Activated naive CD4-positive, alpha-beta T cell treated with anti-CD3 and anti-CD28 coated beads, Interleukin-2, amount 10 ng/mL, durations not matched to agents 7 days and 5 days (primary cell): ENCODE measurements at regions of chr6 and their contacts with region 1.

Region 1: DNA sequence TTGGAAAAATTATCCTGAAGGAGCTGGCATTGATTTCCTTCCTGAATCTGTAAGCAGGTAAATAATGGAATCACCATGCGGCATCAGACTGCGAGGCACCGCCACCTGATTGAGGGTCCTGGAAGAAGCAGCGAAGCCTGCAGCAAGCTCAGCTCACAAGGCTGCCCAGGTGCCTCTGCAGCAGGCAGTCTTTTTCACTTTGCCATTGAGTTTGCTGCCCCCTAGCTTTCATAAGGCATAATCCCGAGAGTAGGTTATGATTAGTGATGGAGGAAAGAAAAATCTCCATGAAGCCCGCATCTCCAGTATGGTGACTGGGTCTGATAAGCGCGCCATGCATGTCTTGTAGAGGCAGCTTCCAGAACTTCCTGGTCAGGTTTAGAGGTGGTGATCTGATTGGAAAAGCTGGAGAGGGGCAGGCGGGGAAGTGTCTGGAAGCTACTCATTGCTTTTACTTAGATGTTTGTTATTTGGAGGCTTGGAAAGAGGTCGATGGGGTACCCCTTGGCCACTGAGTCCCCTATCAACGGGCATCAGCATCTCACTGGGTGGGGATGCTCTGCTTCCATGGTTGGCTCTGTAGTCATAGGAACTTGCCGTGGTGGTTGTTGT is 26.7 kb downstream of the IYD start:
- DNase-seq: peak; percentile 37
- H3K4me3 Mint-ChIP-seq: no peak overlapping the region
- H3K27ac Mint-ChIP-seq: no peak overlapping the region
- H3K4me1 Mint-ChIP-seq: no peaks in the 10 kb centered on the region
- H3K27me3 Mint-ChIP-seq: peaks cover 19% of the 10 kb centered on the region

Region 2: DNA sequence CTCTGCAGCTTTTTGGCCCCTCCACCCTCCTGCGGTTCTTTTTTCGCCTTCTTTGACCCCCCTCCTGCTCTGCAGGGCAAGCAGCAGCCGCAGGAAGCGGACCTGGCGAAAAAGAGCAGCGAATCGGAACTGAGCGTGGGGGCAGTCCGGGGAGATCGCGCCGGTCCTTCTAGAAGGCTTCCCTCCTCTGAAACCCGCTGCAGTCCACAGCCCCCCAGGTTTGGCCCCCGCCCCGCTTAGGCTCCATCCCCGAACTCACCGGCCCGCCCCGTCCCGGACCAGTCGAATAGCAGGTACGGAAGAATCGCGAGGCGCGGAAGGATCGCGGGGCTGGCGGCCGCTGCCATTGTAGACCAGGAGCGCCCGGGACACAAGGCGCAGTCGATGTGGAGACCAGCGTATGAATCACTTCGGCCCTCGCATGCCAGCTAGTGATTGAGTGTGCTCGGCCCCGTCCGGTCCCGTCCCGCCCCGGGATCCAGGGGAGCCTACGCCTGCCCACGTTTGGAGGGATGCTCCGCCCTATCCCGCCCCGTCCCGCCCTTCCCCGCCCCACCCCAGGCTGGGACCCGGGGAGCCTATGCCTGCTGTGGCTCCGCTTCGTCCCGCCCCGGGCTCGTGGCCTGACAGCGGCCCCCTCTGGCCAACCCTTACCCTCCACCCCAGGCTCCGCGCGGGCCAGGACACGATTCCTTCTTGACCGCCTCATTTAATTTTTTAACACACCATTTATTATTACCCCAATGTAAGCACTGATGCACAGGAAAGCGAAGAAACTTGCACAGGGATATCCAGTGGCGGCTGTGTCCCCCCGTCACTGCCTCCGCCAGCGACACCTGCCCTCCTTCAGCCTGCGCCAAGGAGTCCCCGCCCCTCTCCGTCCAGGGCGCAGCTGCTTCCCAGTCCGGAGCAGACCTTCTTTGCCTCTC is 326.5 kb before region 1 on chr6 and contains the start of gene ULBP3:
- CTCF ChIA-PET with region 1: interaction called, 21 read pairs
- DNase-seq: peak; percentile 81
- H3K4me3 Mint-ChIP-seq: peak within 1 kb of the TSS; percentile 74
- H3K27ac Mint-ChIP-seq: no peak within 1 kb of the TSS
- H3K4me1 Mint-ChIP-seq: peaks cover 28% of the 10 kb centered on the region
- H3K27me3 Mint-ChIP-seq: peaks cover 51% of the 10 kb centered on the region

Region 3: GRCh38 chr6:150079604-150080003 is 315.9 kb before region 1 on chr6:
- CTCF ChIA-PET with region 1: interaction called, 40 read pairs
- DNase-seq: peak; percentile 64
- H3K4me3 Mint-ChIP-seq: no peak overlapping the region
- H3K27ac Mint-ChIP-seq: no peak overlapping the region
- H3K4me1 Mint-ChIP-seq: peaks cover 24% of the 10 kb centered on the region
- H3K27me3 Mint-ChIP-seq: peaks cover 40% of the 10 kb centered on the region

Region 4: DNA sequence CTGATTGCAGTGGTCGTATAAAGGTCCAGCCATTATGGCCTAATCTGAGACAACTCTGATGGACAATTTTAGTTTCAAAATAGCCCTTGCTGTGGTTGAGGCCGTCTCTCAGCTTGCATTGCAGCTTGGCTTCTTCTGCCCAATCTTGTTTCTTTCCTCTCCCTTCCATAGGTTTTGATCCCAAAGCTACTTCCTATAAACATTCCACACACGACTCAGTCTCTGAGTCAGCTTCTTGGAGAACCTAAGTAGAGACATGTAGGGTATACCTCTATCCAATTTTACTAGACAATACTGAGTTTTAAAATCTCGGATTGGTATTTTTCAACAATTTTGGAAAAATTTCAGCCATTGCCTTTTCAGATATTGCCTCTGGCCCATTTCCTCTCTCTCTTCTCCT is 13.3 kb before region 1 on chr6:
- CTCF ChIA-PET with region 1: interaction called, 16 read pairs
- DNase-seq: no peak
- H3K4me3 Mint-ChIP-seq: no peak overlapping the region
- H3K27ac Mint-ChIP-seq: no peak overlapping the region
- H3K4me1 Mint-ChIP-seq: no peaks in the 10 kb centered on the region
- H3K27me3 Mint-ChIP-seq: peaks cover 16% of the 10 kb centered on the region

Region 5: DNA sequence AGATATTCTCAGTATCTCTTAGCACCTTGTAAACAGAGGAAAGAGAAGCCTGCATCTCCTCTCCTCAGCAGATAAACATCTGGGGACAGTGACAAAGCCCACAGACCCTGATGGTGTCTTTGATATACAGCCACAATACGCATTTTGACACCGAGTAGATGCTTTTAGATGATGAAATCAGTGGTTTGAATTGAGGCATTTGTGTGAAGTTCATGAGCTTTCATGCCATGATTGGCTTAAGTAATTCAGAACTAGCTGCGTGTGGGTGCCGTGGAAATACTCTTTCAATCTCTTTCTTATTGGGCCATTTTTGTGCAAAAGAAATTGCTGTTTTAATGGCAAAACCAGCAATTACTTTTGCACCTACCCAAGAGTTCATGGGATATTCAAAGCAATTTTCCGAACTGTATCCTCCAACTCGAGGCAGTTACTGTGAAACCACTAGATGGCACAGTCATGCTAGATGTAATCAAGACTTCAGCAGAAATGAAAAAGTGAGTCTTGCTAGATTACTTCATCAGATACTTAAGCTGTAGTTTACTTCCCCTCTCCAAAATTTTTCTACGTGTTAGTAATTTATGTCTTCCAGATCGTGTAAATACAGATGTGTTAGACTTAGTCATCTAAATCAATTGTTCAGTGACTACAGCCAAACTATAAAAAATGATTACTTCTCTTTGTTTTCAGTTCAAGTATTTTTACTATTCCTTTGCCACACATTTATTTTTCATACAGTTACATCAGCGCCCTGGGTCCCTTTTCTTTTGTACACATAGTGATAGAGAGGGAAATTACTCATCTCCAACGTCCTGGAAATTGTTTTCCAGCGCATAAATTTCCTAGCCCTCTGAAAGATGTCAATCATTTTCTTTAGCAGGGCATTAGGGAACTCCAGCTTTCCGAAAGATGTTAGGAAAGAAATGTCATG is 22.7 kb after region 1 on chr6:
- CTCF ChIA-PET with region 1: interaction called, 11 read pairs
- DNase-seq: no peak
- H3K4me3 Mint-ChIP-seq: peak overlapping the region; percentile 53
- H3K27ac Mint-ChIP-seq: no peak overlapping the region
- H3K4me1 Mint-ChIP-seq: peaks cover 14% of the 10 kb centered on the region
- H3K27me3 Mint-ChIP-seq: peaks cover 15% of the 10 kb centered on the region